ENCODE measurements at regions of chr20 and their contacts with region 1.

Region 1: GRCh38 chr20:62156592-62157386 is 13.2 kb downstream of the SS18L1 start:
- DNase-seq: peak; percentile 96
- H3K4me3 ChIP-seq: no peak overlapping the region
- H3K27ac ChIP-seq: peak overlapping the region in 1 of 2 experiments; percentile 9; a peak in 1 of 4 replicates
- H3K4me1 ChIP-seq: peaks cover 0 to 5% of the 10 kb centered on the region in 2 experiments; a peak in 1 of 4 replicates
- H3K27me3 ChIP-seq: no peaks in the 10 kb centered on the region
- CTCF ChIP-seq: peak; percentile 71
- EP300 ChIP-seq: no peak
- RAD21 ChIP-seq: peak; percentile 63

Region 2: GRCh38 chr20:61925555-61926252 is 231.1 kb before region 1 on chr20:
- CTCF ChIA-PET with region 1: no interaction called
- POLR2A ChIA-PET with region 1: no interaction called
- DNase-seq: no peak
- H3K4me3 ChIP-seq: no peak overlapping the region
- H3K27ac ChIP-seq: no peak overlapping the region
- H3K4me1 ChIP-seq: no peaks in the 10 kb centered on the region
- H3K27me3 ChIP-seq: no peaks in the 10 kb centered on the region
- CTCF ChIP-seq: no peak
- EP300 ChIP-seq: no peak
- RAD21 ChIP-seq: no peak

Region 3: GRCh38 chr20:62143118-62143973 is 13.4 kb before region 1 on chr20 and contains the starts of genes PSMA7 and SS18L1:
- CTCF ChIA-PET with region 1: interaction called, 23 read pairs
- POLR2A ChIA-PET with region 1: interaction called, 3 read pairs
- DNase-seq: peak; percentile 97
- H3K4me3 ChIP-seq: peak within 1 kb of the TSS; percentile 88 to 92
- H3K27ac ChIP-seq: peak within 1 kb of the TSS; percentile 34 to 96; a peak in 3 of 4 replicates
- H3K4me1 ChIP-seq: peaks cover 5 to 27% of the 10 kb centered on the region in 2 experiments; a peak in 3 of 4 replicates
- H3K27me3 ChIP-seq: no peaks in the 10 kb centered on the region
- CTCF ChIP-seq: no peak
- EP300 ChIP-seq: no peak
- RAD21 ChIP-seq: no peak
- polyA plus RNA-seq, gene PSMA7: 687 and 801 TPM in 2 replicates
- polyA plus RNA-seq, gene SS18L1: 10.7 and 13.1 TPM in 2 replicates

Region 4: DNA sequence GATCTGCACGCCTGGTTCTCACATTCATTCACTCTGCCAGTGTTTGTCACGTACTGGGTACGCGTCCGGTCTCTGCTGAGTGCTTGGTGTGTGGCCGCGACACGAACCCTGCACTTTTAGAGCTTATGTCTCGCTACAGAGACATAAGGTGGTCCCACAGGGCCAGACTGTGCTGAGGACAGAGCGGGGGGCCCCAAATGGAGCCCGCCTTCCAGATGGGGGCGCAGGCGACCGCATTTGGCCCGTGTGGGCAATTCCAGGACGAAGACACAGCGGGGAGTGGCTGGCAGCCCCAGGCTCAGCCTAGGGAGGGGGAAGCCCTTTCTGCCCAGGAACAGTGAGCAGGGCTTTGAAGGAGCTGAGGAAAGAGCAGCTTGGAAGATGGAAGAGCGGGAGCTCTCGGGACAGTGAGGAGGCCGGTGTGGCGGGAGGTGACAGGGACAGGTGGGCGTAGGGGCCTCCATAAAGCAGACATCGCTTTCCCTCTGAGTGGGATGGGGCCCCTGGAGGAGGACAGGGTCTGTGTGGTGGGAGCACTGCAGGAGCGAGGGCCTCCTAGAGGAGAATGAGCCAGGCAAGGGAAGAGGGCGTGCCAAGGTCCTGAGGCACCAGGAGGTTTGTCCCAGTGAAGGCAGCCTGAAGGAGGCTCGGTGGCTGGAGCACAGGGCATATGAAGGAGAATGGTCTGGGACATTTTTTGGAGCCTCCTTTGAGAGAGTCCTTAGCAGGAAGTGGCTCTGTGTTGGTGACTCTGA is 18.3 kb after region 1 on chr20:
- CTCF ChIA-PET with region 1: interaction called, 11 read pairs
- POLR2A ChIA-PET with region 1: interaction called, 4 read pairs
- DNase-seq: no peak
- H3K4me3 ChIP-seq: no peak overlapping the region
- H3K27ac ChIP-seq: no peak overlapping the region
- H3K4me1 ChIP-seq: peaks cover 0 to 12% of the 10 kb centered on the region in 2 experiments; a peak in 1 of 4 replicates
- H3K27me3 ChIP-seq: no peaks in the 10 kb centered on the region
- CTCF ChIP-seq: no peak
- EP300 ChIP-seq: no peak
- RAD21 ChIP-seq: no peak